Activated T-helper 1 cell treated with anti-CD3 and anti-CD28 coated beads, Interleukin-12 subunit alpha, Interleukin-12 subunit beta, Interleukin-2, Interleukin-4 antibody, amounts not matched to agents 30 ng/mL and 10 ng/mL and 1 ng/mL, durations not matched to agents 14 hours and 24 hours and 36 hours (primary cell): ENCODE measurements at regions of chr3 and their contacts with region 1.

Region 1: GRCh38 chr3:10115326-10116137 is at the start of gene BRK1:
- DNase-seq: peak; percentile 90
- H3K4me3 Mint-ChIP-seq: peak within 1 kb of the TSS; percentile 99
- H3K27ac Mint-ChIP-seq: peak within 1 kb of the TSS; percentile 96
- H3K4me1 Mint-ChIP-seq: peaks cover 31% of the 10 kb centered on the region
- H3K27me3 Mint-ChIP-seq: peaks cover 2% of the 10 kb centered on the region
- total RNA-seq, gene BRK1: 97.2 and 105 TPM in 2 replicates

Region 2: GRCh38 chr3:9649791-9650521 is 465.6 kb before region 1 on chr3:
- intact Hi-C with region 1: loop called (anchors 1 kb)
- DNase-seq: no peak
- H3K4me3 Mint-ChIP-seq: peak overlapping the region; percentile 93
- H3K27ac Mint-ChIP-seq: peak overlapping the region; percentile 82
- H3K4me1 Mint-ChIP-seq: peaks cover 13% of the 10 kb centered on the region
- H3K27me3 Mint-ChIP-seq: no peaks in the 10 kb centered on the region

Region 3: GRCh38 chr3:10010486-10011465 is 104.8 kb before region 1 on chr3:
- intact Hi-C with region 1: loop called (anchors 1 kb)
- DNase-seq: peak; percentile 85
- H3K4me3 Mint-ChIP-seq: peak overlapping the region; percentile 70
- H3K27ac Mint-ChIP-seq: no peak overlapping the region
- H3K4me1 Mint-ChIP-seq: peaks cover 29% of the 10 kb centered on the region
- H3K27me3 Mint-ChIP-seq: peaks cover 4% of the 10 kb centered on the region

Region 4: GRCh38 chr3:10142707-10143566 is 27.4 kb after region 1 on chr3:
- intact Hi-C with region 1: loop called (anchors 1 kb)
- DNase-seq: no peak
- H3K4me3 Mint-ChIP-seq: peak overlapping the region; percentile 90
- H3K27ac Mint-ChIP-seq: peak overlapping the region; percentile 85
- H3K4me1 Mint-ChIP-seq: peaks cover 25% of the 10 kb centered on the region
- H3K27me3 Mint-ChIP-seq: no peaks in the 10 kb centered on the region

Region 5: DNA sequence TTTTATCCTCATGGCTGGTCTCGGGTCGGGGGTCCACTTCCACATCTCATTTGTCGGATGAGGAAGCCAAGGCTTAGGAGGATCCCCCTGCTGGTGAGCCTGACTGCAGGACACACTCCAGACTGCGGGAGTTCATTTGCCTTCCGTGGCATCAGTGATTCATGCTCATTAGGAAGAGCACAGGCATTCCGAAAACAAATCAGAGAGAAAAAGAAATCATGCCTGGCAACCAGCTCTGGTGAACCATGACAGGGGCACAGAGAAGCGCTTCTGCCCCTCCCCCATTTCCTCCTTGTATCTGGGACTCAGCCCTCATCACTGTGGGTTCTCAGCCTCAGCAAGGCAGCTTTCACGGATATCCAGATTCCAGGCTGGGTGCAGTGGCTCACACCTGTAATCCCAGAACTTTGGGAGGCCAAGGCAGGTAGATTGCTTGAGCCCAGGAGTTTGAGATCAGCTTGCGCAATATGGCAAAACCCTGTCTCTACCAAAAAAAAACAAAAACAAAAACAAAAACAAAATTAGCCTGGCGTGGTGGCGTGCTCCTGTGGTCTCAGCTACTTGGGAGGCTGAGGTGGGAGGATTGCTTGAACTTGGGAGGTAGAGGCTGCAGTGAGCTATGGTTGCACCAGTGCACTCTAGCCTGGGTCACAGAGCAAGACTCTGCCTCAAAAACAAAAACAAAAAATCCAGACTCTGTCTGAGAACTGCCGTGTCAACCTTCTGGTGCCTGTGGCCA is 77.6 kb after region 1 on chr3:
- intact Hi-C with region 1: loop called (anchors 2 kb)
- DNase-seq: no peak
- H3K4me3 Mint-ChIP-seq: peak overlapping the region; percentile 63
- H3K27ac Mint-ChIP-seq: peak overlapping the region; percentile 82
- H3K4me1 Mint-ChIP-seq: peaks cover 75% of the 10 kb centered on the region
- H3K27me3 Mint-ChIP-seq: no peaks in the 10 kb centered on the region

Region 6: GRCh38 chr3:10248184-10249080 is 132.9 kb after region 1 on chr3 and contains the start of gene TATDN2:
- intact Hi-C with region 1: loop called (anchors 1 kb)
- DNase-seq: peak; percentile 93
- H3K4me3 Mint-ChIP-seq: peak within 1 kb of the TSS; percentile 97
- H3K27ac Mint-ChIP-seq: peak within 1 kb of the TSS; percentile 97
- H3K4me1 Mint-ChIP-seq: peaks cover 62% of the 10 kb centered on the region
- H3K27me3 Mint-ChIP-seq: no peaks in the 10 kb centered on the region
- total RNA-seq, gene TATDN2: 80.4 and 81.5 TPM in 2 replicates

Region 7: GRCh38 chr3:10322352-10322710 is 206.8 kb after region 1 on chr3:
- intact Hi-C with region 1: loop called (anchors 1 kb)
- DNase-seq: peak; percentile 24
- H3K4me3 Mint-ChIP-seq: peak overlapping the region; percentile 30
- H3K27ac Mint-ChIP-seq: no peak overlapping the region
- H3K4me1 Mint-ChIP-seq: peaks cover 30% of the 10 kb centered on the region
- H3K27me3 Mint-ChIP-seq: peaks cover 13% of the 10 kb centered on the region